ENCODE measurements at regions of chr1 and their contacts with region 1.

Region 1: DNA sequence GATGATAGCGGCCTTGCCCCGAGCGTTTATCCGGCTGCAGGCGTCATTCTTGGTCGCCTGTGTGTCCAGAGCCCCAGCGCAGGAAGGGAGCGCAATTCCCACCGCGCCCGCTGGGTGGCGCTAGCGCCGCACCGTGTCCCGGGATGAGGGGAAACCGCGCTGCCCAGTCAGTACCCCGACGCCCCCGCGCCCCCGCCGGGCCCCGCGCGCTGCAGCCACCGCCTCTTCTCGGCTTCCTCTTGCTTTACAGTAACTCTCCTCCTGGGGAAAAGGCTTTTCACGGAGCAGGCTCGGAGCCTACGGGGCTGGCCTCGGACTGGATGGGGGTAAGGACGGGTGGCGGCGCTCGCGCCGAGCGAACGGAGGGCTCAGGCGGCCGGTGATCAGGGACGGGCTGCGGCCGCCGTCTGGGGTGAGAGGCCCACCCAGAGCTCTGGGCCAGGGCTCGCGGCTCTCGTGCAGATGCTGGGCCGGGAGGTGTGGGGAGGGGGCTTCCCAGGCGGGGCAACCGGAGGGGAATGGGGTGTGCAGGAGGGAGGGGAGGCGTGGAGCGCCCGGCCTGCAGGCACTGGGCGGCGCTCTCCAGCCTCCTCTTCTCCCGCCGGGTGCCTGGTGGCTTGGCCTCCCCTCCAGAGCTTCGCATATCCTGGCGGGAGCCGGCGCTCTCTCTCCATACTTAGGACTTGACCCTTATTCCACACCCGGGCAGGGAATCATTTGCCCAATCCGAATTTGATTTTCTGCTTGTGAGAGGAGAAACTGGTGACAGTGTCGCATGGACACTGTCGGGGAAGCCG is 29.8 kb downstream of the TEX35 start:
- DNase-seq: peak; percentile 87 to 92 (median 88)
- ATAC-seq: peak; percentile 84 to 90 (median 86)
- H3K4me3 ChIP-seq: peak overlapping the region; percentile 68 to 80 (median 72)
- H3K27ac ChIP-seq: peak overlapping the region; percentile 82 to 88 (median 84)
- H3K4me1 ChIP-seq: peaks cover 0 to 17% (median 7%) of the 10 kb centered on the region in 4 donors
- H3K27me3 ChIP-seq: no peaks in the 10 kb centered on the region
- CTCF ChIP-seq: peak; percentile 86 to 98 (median 96)
- POLR2A ChIP-seq: no peak

Region 2: GRCh38 chr1:178629252-178630154 is 86.7 kb after region 1 on chr1:
- intact Hi-C with region 1: loop called in 1 of 2 experiments (anchors 10 kb)
- DNase-seq: no peak
- ATAC-seq: peak; percentile 46 to 70 (median 61)
- H3K4me3 ChIP-seq: no peak overlapping the region
- H3K27ac ChIP-seq: peak overlapping the region in 2 of 3 donors; percentile 61 to 77
- H3K4me1 ChIP-seq: peaks cover 0 to 45% (median 9%) of the 10 kb centered on the region in 4 donors
- H3K27me3 ChIP-seq: no peaks in the 10 kb centered on the region
- CTCF ChIP-seq: peak in 1 of 4 donors; percentile 13
- POLR2A ChIP-seq: no peak

Region 3: GRCh38 chr1:178768423-178768822 is 225.7 kb after region 1 on chr1:
- intact Hi-C with region 1: loop called in 1 of 2 experiments (anchors 10 kb)
- DNase-seq: no peak
- ATAC-seq: peak; percentile 73 to 88 (median 82)
- H3K4me3 ChIP-seq: no peak overlapping the region
- H3K27ac ChIP-seq: no peak overlapping the region
- H3K4me1 ChIP-seq: no peaks in the 10 kb centered on the region
- H3K27me3 ChIP-seq: no peaks in the 10 kb centered on the region
- CTCF ChIP-seq: peak; percentile 60 to 79 (median 70)
- POLR2A ChIP-seq: no peak

Region 4: DNA sequence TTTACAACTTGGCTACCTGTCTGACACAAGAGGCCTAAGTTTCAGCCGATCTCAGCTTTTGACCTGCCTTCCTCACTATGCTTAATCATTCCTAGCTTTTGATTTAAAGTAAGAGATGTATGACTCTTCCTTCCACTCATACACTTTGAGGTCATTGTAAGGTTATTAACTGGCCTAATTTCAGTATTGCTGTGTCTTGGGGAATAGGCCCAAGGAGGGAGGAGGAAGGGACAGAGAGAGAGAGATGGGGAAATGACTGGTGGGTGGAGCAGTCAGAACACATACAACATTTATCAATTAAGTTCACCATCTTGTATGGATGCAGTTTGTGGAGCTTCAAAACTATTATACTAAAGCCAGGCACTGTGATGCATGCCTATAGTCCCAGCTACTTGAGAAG is 454.7 kb after region 1 on chr1:
- intact Hi-C with region 1: loop called in 1 of 2 experiments (anchors 5 kb)
- DNase-seq: no peak
- ATAC-seq: no peak
- H3K4me3 ChIP-seq: no peak overlapping the region
- H3K27ac ChIP-seq: no peak overlapping the region
- H3K4me1 ChIP-seq: no peaks in the 10 kb centered on the region
- H3K27me3 ChIP-seq: no peaks in the 10 kb centered on the region
- CTCF ChIP-seq: no peak
- POLR2A ChIP-seq: no peak

Region 5: GRCh38 chr1:179016747-179017549 is 474.2 kb after region 1 on chr1:
- intact Hi-C with region 1: loop called in 1 of 2 experiments (anchors 10 kb)
- DNase-seq: peak; percentile 91 to 95 (median 94)
- ATAC-seq: peak; percentile 96 to 99 (median 98)
- H3K4me3 ChIP-seq: no peak overlapping the region
- H3K27ac ChIP-seq: no peak overlapping the region
- H3K4me1 ChIP-seq: peaks cover 0 to 7% (median 0%) of the 10 kb centered on the region in 4 donors
- H3K27me3 ChIP-seq: no peaks in the 10 kb centered on the region
- CTCF ChIP-seq: no peak
- POLR2A ChIP-seq: no peak